Transverse colon (tissue), 4 donors: ENCODE measurements at regions of chr9 and their contacts with region 1.

Region 1: DNA sequence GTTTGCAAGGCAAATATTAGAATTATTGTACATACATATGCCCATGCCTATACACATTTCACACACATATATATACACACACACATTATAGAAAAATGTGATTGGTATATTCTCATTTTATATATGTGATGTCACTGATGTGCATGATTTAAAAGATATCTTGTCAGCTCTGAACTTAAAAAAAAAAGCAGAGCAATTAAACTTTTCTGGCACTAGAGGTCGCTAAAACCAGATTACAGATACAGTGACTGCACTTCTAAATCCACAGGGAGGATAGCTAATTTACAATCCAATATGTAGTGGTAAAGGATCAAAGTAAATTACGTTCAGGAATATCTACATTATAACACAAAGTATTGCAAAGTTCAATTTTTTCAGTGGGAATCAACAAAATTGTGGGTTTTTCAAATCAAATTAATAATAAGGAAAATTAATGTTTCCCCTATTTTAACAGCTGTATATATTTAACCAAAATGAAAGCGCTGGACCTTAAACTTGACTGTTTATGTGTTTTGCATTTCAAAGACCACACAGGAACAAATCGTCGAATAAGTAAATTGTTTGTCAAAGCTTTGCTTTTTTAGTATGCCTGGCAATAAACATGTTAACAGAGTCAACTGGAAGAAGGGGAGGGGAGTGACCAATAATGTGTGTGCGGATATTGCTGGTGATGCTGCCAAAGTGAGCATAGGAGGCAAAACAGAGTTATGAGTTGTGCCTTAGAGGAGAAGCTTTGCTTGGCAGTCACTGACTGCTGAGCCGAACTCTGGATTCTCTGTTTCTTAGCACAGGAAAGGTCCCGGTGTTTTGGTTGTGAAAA is 1201.3 kb upstream of the C9orf72 start:
- DNase-seq: no peak
- H3K4me3 ChIP-seq: no peak overlapping the region
- H3K27ac ChIP-seq: no peak overlapping the region
- H3K4me1 ChIP-seq: no peaks in the 10 kb centered on the region
- H3K27me3 ChIP-seq: no peaks in the 10 kb centered on the region
- CTCF ChIP-seq: peak; percentile 30 to 55 (median 46)
- EP300 ChIP-seq: no peak
- POLR2A ChIP-seq: no peak

Region 2: DNA sequence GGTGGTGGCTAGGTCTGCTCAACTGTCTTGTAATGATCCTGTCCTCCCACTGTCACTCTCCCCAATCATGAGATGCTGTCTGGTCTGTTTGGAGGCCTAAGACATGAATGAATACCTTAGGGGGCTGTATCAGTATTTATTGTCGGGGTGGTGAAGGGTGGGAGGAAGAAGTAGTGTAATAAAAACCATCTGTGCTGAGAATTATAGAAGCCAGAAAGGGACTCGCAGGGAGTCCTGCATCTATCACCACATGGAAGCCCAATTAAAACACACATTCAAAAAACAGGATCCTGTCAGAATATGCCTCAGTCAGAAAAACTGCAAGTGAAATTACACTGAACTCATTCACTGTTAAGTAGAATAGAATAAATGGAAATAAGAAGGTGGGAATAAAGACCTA is 67.0 kb before region 1 on chr9:
- in situ Hi-C with region 1: no loop called
- intact Hi-C with region 1: no loop called
- DNase-seq: no peak
- H3K4me3 ChIP-seq: no peak overlapping the region
- H3K27ac ChIP-seq: no peak overlapping the region
- H3K4me1 ChIP-seq: no peaks in the 10 kb centered on the region
- H3K27me3 ChIP-seq: no peaks in the 10 kb centered on the region
- CTCF ChIP-seq: no peak
- EP300 ChIP-seq: no peak
- POLR2A ChIP-seq: no peak

Region 3: DNA sequence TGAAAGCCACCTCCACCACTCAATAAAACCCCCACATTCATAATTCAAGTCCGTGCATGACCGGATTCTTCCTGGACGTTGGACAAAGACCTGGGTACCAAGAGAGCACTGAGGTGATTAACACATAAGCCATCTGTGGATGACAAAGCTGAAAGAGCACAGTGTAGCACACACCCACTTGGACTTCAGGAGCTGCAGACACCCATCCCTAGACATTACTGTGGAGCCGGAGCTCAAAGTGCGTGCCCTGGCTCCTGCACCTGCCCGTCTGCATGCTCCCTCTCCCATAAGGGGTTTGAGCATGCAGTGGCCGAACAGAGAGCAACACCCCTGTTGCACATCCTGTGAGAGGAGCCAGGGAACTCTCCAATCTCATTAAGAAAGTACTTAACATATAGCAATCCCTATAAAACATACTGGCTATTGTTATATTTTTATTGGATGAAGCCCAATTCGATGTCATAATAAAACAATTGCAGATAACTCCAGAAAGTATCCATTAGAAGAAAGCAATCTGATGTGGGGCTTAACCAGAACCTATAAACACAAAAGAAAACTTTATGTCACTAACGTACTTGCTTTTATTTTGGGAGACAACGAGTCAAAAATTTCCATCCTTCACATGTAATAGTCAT is 27.2 kb before region 1 on chr9:
- in situ Hi-C with region 1: no loop called
- intact Hi-C with region 1: no loop called
- DNase-seq: no peak
- H3K4me3 ChIP-seq: no peak overlapping the region
- H3K27ac ChIP-seq: no peak overlapping the region
- H3K4me1 ChIP-seq: no peaks in the 10 kb centered on the region
- H3K27me3 ChIP-seq: no peaks in the 10 kb centered on the region
- CTCF ChIP-seq: no peak
- EP300 ChIP-seq: no peak
- POLR2A ChIP-seq: no peak

Region 4: GRCh38 chr9:29241320-29241719 is 466.7 kb after region 1 on chr9:
- in situ Hi-C with region 1: loop called in 1 of 4 experiments (anchors 25 kb)
- intact Hi-C with region 1: no loop called
- DNase-seq: no peak
- H3K4me3 ChIP-seq: no peak overlapping the region
- H3K27ac ChIP-seq: no peak overlapping the region
- H3K4me1 ChIP-seq: no peaks in the 10 kb centered on the region
- H3K27me3 ChIP-seq: no peaks in the 10 kb centered on the region
- CTCF ChIP-seq: no peak
- EP300 ChIP-seq: no peak
- POLR2A ChIP-seq: no peak